Activated B cell treated with CpG ODN at 0.5 μM for 24 hours (primary cell): ENCODE measurements at regions of chr12 and their contacts with region 1.

Region 1: DNA sequence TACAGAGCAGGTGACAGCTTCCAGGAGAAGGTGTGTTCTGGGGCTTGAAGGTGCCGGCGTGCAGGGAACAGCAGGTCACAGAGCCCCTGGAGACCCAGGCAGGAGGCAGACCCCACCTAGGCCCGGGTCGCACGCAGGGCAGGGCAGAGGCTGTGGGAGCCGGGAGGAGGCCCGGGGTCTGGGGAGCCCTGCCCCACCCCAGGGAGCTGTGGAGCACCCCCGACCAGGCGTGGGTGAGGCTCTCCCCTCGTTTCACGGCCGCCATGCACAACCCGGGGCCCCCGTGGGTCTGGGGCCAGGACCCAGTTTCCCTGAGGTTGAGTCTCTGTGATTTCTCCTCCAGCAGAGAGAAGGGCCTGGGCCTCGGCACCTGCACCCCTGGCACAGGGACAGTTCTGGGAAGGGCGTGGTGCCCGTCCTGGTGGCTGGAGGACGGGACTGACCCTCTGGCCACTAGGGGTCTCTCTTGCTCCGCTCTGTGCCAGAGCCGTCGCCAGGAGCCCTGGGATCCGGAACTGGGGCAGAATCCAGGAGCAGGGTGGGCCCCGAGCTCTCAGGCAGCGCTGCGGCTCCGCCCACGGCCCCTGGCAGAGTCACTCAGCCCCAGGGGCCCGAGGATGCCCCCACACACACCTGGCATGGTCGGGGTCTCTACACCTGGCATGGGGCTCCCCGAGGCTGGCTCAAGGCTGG is 75.2 kb upstream of the FBRSL1 start:
- DNase-seq: peak; percentile 68
- ATAC-seq: peak; percentile 96
- H3K4me3 Mint-ChIP-seq: no peak overlapping the region
- H3K27ac Mint-ChIP-seq: no peak overlapping the region
- H3K4me1 Mint-ChIP-seq: peaks cover 9% of the 10 kb centered on the region
- H3K27me3 Mint-ChIP-seq: no peaks in the 10 kb centered on the region
- CTCF ChIP-seq: no peak

Region 2: DNA sequence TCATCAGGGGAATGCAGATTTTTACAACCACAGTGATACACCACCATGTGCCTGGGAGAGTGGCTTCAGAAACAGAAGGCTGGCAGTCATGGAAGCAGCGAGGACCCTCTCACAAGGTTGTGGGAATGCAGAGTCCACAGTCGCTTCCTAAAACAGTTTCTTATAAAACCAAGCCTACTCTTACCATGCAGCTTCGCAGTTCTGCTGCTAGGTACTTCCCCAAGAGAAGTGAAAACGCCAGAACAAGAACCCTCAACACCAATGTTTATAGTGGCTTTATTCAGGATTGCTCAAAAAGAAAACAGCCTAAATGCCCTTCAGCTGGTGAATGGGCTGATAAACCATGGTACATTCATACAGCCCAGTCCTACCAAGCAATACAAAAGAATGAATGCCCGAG is 357.8 kb before region 1 on chr12:
- CTCF ChIA-PET with region 1: no interaction called
- POLR2A ChIA-PET with region 1: no interaction called
- intact Hi-C with region 1: no loop called
- DNase-seq: no peak
- ATAC-seq: peak; percentile 71
- H3K4me3 Mint-ChIP-seq: peak overlapping the region; percentile 24
- H3K27ac Mint-ChIP-seq: peak overlapping the region; percentile 61
- H3K4me1 Mint-ChIP-seq: peaks cover 39% of the 10 kb centered on the region
- H3K27me3 Mint-ChIP-seq: no peaks in the 10 kb centered on the region
- CTCF ChIP-seq: no peak

Region 3: DNA sequence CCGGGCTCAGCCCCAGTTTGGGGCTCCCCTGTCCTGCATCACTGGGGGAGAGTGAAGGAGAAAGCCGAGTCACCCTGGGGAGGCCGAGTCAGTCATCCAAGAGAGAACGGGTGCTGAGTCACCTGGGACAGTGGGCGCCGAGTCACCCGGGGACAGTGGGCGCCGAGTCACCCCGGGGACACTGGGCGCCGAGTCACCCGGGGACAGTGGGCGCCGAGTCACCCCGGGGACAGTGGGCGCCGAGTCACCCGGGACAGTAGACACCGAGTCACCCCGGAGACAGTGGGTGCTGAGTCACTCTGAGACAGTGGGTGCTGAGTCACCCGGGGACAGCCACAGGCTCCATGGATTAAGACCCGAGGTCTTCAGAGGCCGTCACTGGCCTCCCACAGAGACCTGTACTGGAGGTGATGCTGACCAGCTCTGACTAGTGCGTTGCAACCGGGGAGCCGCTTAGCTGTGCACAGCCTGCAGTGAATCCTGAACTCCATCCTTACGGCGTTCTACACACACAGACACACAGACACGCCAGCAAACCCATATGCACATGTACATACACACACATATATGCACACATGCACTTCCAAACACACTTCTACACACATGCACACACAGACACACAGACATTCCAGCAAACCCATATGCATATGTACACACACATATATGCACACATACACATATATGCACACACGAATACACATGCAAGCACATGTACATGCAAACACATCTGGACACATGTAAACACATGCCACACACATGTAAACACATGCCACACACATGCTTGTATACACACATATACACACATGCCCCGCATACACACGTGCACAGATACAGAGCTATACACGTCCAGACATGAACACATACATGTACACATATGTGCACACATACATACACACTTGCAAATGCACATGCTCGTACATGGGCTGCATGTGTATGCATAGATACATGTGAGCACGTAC is 20.5 kb before region 1 on chr12:
- CTCF ChIA-PET with region 1: no interaction called
- POLR2A ChIA-PET with region 1: no interaction called
- intact Hi-C with region 1: no loop called
- DNase-seq: no peak
- ATAC-seq: no peak
- H3K4me3 Mint-ChIP-seq: no peak overlapping the region
- H3K27ac Mint-ChIP-seq: no peak overlapping the region
- H3K4me1 Mint-ChIP-seq: peaks cover 2% of the 10 kb centered on the region
- H3K27me3 Mint-ChIP-seq: peaks cover 15% of the 10 kb centered on the region
- CTCF ChIP-seq: no peak

Region 4: GRCh38 chr12:132429946-132430643 is 15.3 kb after region 1 on chr12:
- CTCF ChIA-PET with region 1: interaction called, 33 read pairs
- POLR2A ChIA-PET with region 1: no interaction called
- intact Hi-C with region 1: loop called (anchors 1 kb)
- DNase-seq: peak; percentile 60
- ATAC-seq: peak; percentile 87
- H3K4me3 Mint-ChIP-seq: peak overlapping the region; percentile 60
- H3K27ac Mint-ChIP-seq: peak overlapping the region; percentile 30
- H3K4me1 Mint-ChIP-seq: peaks cover 61% of the 10 kb centered on the region
- H3K27me3 Mint-ChIP-seq: no peaks in the 10 kb centered on the region
- CTCF ChIP-seq: no peak

Region 5: GRCh38 chr12:132517013-132517739 is 102.4 kb after region 1 on chr12:
- CTCF ChIA-PET with region 1: interaction called, 105 read pairs
- POLR2A ChIA-PET with region 1: no interaction called
- intact Hi-C with region 1: no loop called
- DNase-seq: no peak
- ATAC-seq: no peak
- H3K4me3 Mint-ChIP-seq: no peak overlapping the region
- H3K27ac Mint-ChIP-seq: no peak overlapping the region
- H3K4me1 Mint-ChIP-seq: no peaks in the 10 kb centered on the region
- H3K27me3 Mint-ChIP-seq: no peaks in the 10 kb centered on the region
- CTCF ChIP-seq: no peak

Region 6: DNA sequence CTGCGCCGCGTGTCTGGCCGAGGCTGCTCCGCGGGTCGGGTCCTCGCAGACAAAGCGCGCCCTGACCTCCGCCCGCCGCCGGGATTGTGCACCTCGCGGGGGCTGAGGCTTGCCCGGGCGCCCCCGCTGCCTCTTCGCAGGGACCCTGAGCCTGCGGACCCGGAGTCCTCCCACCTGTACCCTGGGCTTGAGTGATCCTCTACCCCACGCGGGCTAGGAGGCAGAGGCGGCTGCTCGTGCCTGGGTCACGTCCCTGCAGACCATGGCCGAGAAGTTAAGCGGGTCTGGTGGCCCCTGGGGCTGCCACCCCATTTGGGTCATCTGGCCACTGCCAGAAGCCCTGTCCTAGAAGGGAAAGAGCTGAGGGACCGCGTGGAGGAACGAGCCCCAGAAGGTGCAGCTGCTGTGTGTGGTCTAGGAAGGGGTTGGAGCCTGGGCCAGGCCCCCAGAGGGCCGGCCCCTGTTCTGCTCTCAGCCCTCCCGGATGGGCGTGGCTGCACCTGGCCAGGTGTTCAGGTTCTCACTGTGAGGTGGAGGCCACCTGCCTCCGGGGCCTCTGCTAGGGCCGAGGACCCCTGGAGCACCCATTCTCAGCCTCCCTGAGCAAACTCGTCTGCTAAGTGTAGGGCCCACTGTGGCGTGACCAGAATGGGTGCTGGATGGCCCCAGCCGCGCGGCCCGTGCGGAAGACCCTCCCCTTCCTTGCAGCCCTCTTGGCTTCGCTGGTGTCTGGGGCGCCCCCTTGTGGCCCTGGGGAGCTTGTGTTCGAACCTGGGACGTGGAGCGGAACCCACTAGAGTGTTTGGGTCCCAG is 146.0 kb after region 1 on chr12:
- CTCF ChIA-PET with region 1: interaction called, 39 read pairs
- POLR2A ChIA-PET with region 1: interaction called, 7 read pairs
- intact Hi-C with region 1: loop called (anchors 1 kb)
- DNase-seq: peak; percentile 75
- ATAC-seq: peak; percentile 69
- H3K4me3 Mint-ChIP-seq: peak overlapping the region; percentile 77
- H3K27ac Mint-ChIP-seq: no peak overlapping the region
- H3K4me1 Mint-ChIP-seq: peaks cover 21% of the 10 kb centered on the region
- H3K27me3 Mint-ChIP-seq: no peaks in the 10 kb centered on the region
- CTCF ChIP-seq: peak; percentile 35